ENCODE measurements at regions of chr11 and their contacts with region 1.

Region 1: GRCh38 chr11:120936356-120936755 is 87.5 kb upstream of the TBCEL start:
- DNase-seq: no peak
- ATAC-seq: no peak; a peak in 1 of 6 replicates
- H3K4me3 ChIP-seq: no peak overlapping the region
- H3K27ac ChIP-seq: no peak overlapping the region
- H3K4me1 ChIP-seq: no peaks in the 10 kb centered on the region
- CTCF ChIP-seq: no peak
- EP300 ChIP-seq: no peak
- POLR2A ChIP-seq: no peak
- RAD21 ChIP-seq: no peak

Region 2: GRCh38 chr11:120952461-120953434 is 16.4 kb after region 1 on chr11:
- CTCF ChIA-PET with region 1: interaction called, 10 read pairs
- POLR2A ChIA-PET with region 1: no interaction called
- DNase-seq: peak; percentile 67 to 74
- ATAC-seq: peak; percentile 84 to 95
- H3K4me3 ChIP-seq: 0 out of 3 replicates have a peak overlapping the region, but pooled peaks have one; percentile 10
- H3K27ac ChIP-seq: no peak overlapping the region
- H3K4me1 ChIP-seq: no peaks in the 10 kb centered on the region
- CTCF ChIP-seq: peak; percentile 57
- EP300 ChIP-seq: no peak
- POLR2A ChIP-seq: no peak
- RAD21 ChIP-seq: peak; percentile 76 to 82

Measured in A549 (cell line).